H1 (cell line): ENCODE measurements at regions of chr22 and their contacts with region 1.

Region 1: GRCh38 chr22:40641269-40641668 is 4.8 kb upstream of the MRTFA start:
- DNase-seq: no peak
- H3K4me3 ChIP-seq: no peak overlapping the region
- H3K27ac ChIP-seq: no peak overlapping the region
- H3K4me1 ChIP-seq: peaks cover 0 to 3% (median 2%) of the 10 kb centered on the region in 4 experiments; a peak in 4 of 7 replicates
- H3K27me3 ChIP-seq: no peaks in the 10 kb centered on the region
- CTCF ChIP-seq: no peak
- EP300 ChIP-seq: no peak
- POLR2A ChIP-seq: no peak
- RAD21 ChIP-seq: no peak

Region 2: GRCh38 chr22:40426594-40427333 is 214.5 kb before region 1 on chr22:
- CTCF ChIA-PET with region 1: interaction called, 11 read pairs
- POLR2A ChIA-PET with region 1: no interaction called
- DNase-seq: no peak
- H3K4me3 ChIP-seq: no peak overlapping the region
- H3K27ac ChIP-seq: no peak overlapping the region
- H3K4me1 ChIP-seq: no peaks in the 10 kb centered on the region
- H3K27me3 ChIP-seq: no peaks in the 10 kb centered on the region
- CTCF ChIP-seq: no peak
- EP300 ChIP-seq: no peak
- POLR2A ChIP-seq: no peak
- RAD21 ChIP-seq: no peak